Tibial artery (tissue), 4 donors: ENCODE measurements at regions of chr6 and their contacts with region 1.

Region 1: DNA sequence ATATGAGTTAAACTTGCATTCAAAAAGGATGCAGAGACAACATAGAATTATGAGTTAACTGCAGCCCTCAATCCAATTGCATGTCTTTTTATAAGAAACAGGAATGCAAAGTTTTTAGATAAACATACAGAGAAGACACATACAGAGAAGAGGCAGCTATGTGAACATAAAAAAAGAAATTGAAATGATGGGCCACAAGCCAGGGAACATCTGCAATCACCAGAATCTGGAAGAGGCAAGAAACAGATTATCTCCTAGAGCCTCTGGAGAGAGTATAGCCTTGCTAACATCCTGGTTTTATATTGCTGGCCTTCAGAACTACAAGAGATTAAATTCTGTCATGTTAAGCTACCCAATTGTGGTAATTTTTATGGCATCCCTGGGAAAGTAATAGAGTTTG is 257.2 kb upstream of the EYS start:
- DNase-seq: no peak
- H3K4me3 ChIP-seq: no peak overlapping the region
- H3K27ac ChIP-seq: no peak overlapping the region
- H3K4me1 ChIP-seq: no peaks in the 10 kb centered on the region
- H3K27me3 ChIP-seq: no peaks in the 10 kb centered on the region
- CTCF ChIP-seq: no peak

Region 2: DNA sequence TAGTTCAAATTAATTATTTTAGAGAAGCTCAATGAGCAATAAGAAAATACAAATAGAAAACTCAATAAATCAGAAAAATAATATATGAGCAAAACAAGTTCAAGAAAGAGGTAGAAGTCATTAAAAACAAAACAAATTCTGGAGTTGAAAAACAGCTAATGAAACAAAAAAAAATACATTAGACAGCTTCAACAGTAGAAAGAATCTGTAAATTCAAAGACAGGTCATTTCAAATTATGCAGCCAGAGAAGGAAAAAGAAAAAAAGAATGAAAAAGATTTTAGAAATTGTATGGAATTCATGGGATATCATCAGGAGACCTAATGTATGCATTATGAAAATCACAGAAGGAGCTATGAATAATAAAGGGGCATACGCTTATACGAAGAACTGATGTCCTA is 1875.6 kb after region 1 on chr6:
- intact Hi-C with region 1: loop called (anchors 10 kb)
- DNase-seq: no peak
- H3K4me3 ChIP-seq: no peak overlapping the region
- H3K27ac ChIP-seq: no peak overlapping the region
- H3K4me1 ChIP-seq: no peaks in the 10 kb centered on the region
- H3K27me3 ChIP-seq: no peaks in the 10 kb centered on the region
- CTCF ChIP-seq: no peak